ENCODE measurements at regions of chr22 and their contacts with region 1.

Region 1: DNA sequence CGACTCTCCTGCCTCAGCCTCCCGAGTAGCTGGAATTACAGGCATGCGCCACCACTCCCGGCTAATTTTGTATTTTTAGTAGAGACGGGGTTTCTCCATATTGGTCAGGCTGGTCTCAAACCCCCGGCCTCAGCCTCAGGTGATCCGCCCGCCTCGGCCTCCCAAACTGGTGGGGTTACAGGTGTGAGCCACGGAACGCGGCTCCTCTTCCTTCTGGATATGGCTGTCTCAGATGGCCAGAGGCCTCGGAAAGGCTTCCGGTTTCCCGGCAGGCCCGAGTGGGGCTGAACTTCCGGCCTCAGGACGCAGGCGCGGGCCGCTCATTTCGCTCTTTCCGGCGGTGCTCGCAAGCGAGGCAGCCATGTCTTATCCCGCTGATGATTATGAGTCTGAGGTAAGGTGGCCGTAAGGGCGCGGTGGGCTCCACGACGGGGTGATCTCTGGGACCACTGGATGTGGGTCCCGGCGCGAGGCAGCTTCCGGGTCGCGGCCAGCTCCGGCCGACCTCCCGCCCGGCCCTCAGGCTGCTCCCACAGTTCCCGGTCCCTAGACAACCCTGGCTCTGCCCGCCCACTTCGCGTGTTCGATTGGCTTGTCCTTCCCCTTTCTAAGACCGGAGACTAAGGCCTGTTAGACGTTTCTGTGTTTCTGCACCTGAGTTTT is at the start of gene EIF3L:
- DNase-seq: peak; percentile 79 to 93 (median 85)
- ATAC-seq: peak; percentile 89
- H3K4me3 ChIP-seq: peak within 1 kb of the TSS; percentile 79
- H3K27ac ChIP-seq: peak within 1 kb of the TSS; percentile 93
- H3K4me1 ChIP-seq: peaks cover 3 to 8% of the 10 kb centered on the region in 2 experiments; a peak in 3 of 5 replicates
- H3K27me3 ChIP-seq: no peaks in the 10 kb centered on the region
- CTCF ChIP-seq: no peak
- EP300 ChIP-seq: no peak; the same call in 1 of the 2 replicates
- POLR2A ChIP-seq: peak; percentile 98
- RAD21 ChIP-seq: no peak
- polyA plus RNA-seq, gene EIF3L: 368 to 462 TPM

Region 2: DNA sequence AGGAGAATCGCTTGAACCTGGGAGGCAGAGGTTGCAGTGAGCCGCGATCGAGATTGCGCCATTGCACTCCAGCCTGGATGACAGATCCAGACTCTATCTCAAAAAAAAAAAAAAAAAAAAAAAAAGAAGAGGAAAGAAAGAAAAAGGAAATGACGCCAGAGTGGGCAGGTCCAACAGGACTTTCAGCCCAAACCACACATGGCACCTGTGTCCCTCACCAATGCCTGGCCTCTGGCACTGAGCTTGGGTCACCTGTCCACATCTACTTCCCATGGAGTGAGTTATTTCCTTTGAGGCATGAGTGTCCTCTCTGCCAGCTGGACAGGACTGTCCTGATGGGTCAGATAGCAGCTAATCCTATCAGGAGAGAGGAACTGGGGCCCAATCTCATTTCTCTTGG is 56.7 kb before region 1 on chr22:
- CTCF ChIA-PET with region 1: no interaction called
- POLR2A ChIA-PET with region 1: no interaction called
- in situ Hi-C with region 1: no loop called
- intact Hi-C with region 1: no loop called
- DNase-seq: no peak
- ATAC-seq: no peak
- H3K4me3 ChIP-seq: no peak overlapping the region
- H3K27ac ChIP-seq: no peak overlapping the region
- H3K4me1 ChIP-seq: peaks cover 0 to 3% of the 10 kb centered on the region in 2 experiments; a peak in 1 of 5 replicates
- H3K27me3 ChIP-seq: no peaks in the 10 kb centered on the region
- CTCF ChIP-seq: no peak
- EP300 ChIP-seq: no peak
- POLR2A ChIP-seq: no peak
- RAD21 ChIP-seq: no peak

Region 3: GRCh38 chr22:37802310-37803194 is 46.7 kb before region 1 on chr22:
- CTCF ChIA-PET with region 1: no interaction called
- POLR2A ChIA-PET with region 1: no interaction called
- in situ Hi-C with region 1: no loop called
- intact Hi-C with region 1: loop called (anchors 2 kb)
- DNase-seq: peak; percentile 52 to 70 (median 56)
- ATAC-seq: peak; percentile 79
- H3K4me3 ChIP-seq: peak overlapping the region; percentile 42
- H3K27ac ChIP-seq: peak overlapping the region; percentile 83
- H3K4me1 ChIP-seq: peaks cover 27 to 50% of the 10 kb centered on the region in 2 experiments
- H3K27me3 ChIP-seq: no peaks in the 10 kb centered on the region
- CTCF ChIP-seq: no peak
- EP300 ChIP-seq: no peak
- POLR2A ChIP-seq: peak; percentile 62
- RAD21 ChIP-seq: no peak

Region 4: DNA sequence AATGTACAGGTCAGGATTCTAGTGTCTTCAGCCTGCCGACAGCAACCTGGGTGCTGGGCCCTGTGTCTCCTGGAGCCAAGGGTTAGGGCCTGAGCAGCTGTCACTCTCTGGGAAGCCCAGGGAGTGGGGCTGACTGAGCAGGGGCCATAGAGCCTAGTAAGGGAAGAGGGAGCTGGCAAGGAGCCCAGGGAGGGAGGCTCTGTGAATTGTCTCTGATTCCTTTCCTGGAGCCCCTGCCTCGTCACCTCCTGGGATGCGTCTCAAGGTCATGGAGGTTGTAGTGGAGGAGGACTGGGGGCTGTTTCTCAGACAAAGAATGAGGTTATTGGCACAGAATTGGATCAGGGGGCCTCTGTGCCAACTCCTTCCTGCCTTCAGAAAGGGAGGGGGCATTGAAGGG is 123.3 kb after region 1 on chr22:
- CTCF ChIA-PET with region 1: no interaction called
- POLR2A ChIA-PET with region 1: no interaction called
- in situ Hi-C with region 1: no loop called
- intact Hi-C with region 1: no loop called
- DNase-seq: no peak
- ATAC-seq: no peak
- H3K4me3 ChIP-seq: no peak overlapping the region
- H3K27ac ChIP-seq: no peak overlapping the region
- H3K4me1 ChIP-seq: peaks cover 0 to 7% of the 10 kb centered on the region in 2 experiments; a peak in 2 of 5 replicates
- H3K27me3 ChIP-seq: no peaks in the 10 kb centered on the region
- CTCF ChIP-seq: no peak
- EP300 ChIP-seq: no peak
- POLR2A ChIP-seq: no peak
- RAD21 ChIP-seq: no peak